ENCODE measurements at regions of chr5 and their contacts with region 1.

Region 1: GRCh38 chr5:77491783-77492652 is at the start of gene WDR41:
- DNase-seq: peak; percentile 83
- H3K4me3 ChIP-seq: peak within 1 kb of the TSS; percentile 58 to 80
- H3K27ac ChIP-seq: peak within 1 kb of the TSS; percentile 88 to 95
- H3K4me1 ChIP-seq: peaks cover 5% of the 10 kb centered on the region
- H3K27me3 ChIP-seq: no peaks in the 10 kb centered on the region
- CTCF ChIP-seq: peak; percentile 94 to 96 (median 96)
- POLR2A ChIP-seq: peak; percentile 56
- total RNA-seq, gene WDR41: 28.8 to 76.1 TPM

Region 2: GRCh38 chr5:76867827-76868693 is 624.0 kb before region 1 on chr5:
- intact Hi-C with region 1: loop called (anchors 10 kb)
- DNase-seq: peak; percentile 42
- H3K4me3 ChIP-seq: no peak overlapping the region
- H3K27ac ChIP-seq: no peak overlapping the region
- H3K4me1 ChIP-seq: no peaks in the 10 kb centered on the region
- H3K27me3 ChIP-seq: no peaks in the 10 kb centered on the region
- CTCF ChIP-seq: peak in 3 of 4 experiments; percentile 50 to 78 (median 77)
- POLR2A ChIP-seq: no peak

Region 3: DNA sequence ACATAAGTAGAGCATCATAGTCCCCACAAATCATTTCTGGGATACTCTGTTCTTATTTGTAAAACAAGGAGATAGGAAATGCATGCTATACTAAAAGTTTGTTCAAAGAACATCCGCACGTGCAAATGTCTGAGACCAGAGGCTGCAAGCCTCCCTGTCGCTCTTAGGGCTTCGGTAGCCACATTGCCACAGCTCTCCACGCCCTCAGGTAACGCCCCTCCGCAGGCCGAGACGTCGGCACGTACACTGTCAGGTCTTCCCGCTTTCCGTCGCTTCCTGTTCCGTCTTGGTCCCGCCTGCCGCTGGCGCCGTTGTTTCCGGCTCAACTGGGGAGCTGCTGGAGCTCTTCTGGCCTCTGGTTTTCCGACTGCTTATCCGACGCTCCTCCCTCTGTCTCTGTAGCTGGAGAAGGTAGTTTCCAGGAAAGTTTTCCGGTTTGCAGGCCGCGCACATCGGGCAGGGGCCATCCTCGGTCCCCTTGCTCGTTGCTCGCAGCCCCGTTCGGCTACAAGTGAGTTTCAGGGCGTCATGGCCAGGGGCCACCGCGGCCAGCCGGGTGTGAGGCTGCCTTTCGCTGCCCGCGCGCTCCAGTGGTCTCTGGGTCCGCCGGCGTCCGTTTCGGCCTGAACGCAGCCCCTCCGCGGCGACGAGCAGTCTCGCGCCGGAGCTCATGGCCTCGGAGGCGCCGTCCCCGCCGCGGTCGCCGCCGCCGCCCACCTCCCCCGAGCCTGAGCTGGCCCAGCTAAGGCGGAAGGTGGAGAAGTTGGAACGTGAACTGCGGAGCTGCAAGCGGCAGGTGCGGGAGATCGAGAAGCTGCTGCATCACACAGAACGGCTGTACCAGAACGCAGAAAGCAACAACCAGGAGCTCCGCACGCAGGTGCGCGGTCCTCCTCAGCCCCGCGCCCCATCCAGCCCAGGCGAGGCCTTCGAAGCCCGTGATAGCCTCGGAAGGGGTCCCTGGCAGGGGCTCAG is 461.6 kb before region 1 on chr5 and contains the start of gene AGGF1:
- intact Hi-C with region 1: loop called (anchors 2 kb)
- DNase-seq: peak; percentile 94
- H3K4me3 ChIP-seq: peak within 1 kb of the TSS; percentile 82 to 86
- H3K27ac ChIP-seq: peak within 1 kb of the TSS; percentile 86 to 87
- H3K4me1 ChIP-seq: no peaks in the 10 kb centered on the region
- H3K27me3 ChIP-seq: no peaks in the 10 kb centered on the region
- CTCF ChIP-seq: no peak
- POLR2A ChIP-seq: peak; percentile 64
- total RNA-seq, gene AGGF1: 28.5 to 29.6 TPM

Region 4: GRCh38 chr5:77076961-77077823 is 414.8 kb before region 1 on chr5:
- intact Hi-C with region 1: loop called (anchors 2 kb)
- DNase-seq: peak; percentile 24
- H3K4me3 ChIP-seq: peak overlapping the region; percentile 33 to 39
- H3K27ac ChIP-seq: peak overlapping the region; percentile 39 to 56
- H3K4me1 ChIP-seq: peaks cover 2% of the 10 kb centered on the region
- H3K27me3 ChIP-seq: no peaks in the 10 kb centered on the region
- CTCF ChIP-seq: peak; percentile 31 to 53 (median 46)
- POLR2A ChIP-seq: no peak

Region 5: DNA sequence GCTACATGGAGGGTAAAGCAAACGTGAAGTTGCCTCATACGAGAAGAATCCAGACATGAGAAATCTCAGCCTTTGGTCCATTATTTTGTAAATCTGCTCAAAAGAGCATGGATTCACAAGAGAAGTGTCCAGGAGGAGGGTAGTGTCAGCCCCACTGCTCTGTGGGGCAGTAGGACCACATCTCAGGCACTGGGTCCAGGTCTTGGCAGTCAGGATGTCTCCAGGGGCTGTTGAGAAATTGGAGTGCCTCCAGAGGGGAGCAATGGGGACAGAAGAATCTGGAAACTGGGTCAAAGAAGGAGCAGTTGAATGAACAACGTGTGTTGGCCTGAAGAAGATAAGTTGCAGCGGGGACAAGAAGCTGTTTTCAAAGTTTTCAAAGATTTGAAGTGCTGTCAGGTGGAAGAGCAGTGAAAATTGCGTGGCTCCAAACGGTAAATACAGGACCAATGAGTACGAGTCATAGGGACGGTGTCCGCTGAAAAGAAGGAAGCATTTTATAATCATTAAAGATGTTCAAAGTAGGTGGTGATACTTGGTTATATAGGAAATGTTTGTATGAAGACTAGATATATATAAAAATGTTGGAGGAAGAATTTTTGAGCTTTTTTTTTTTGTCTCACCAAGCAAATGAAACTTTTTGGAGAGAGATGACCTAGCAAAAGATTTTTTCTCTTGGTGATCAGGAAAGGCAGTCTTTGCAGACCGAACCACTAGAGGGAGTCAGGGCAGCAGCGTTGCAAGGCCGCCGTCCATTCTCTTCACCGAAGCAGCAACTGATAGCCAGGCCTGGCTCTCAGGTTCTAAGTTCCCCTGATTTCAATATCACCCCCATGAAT is 347.8 kb before region 1 on chr5:
- intact Hi-C with region 1: loop called (anchors 1 kb)
- DNase-seq: peak; percentile 80
- H3K4me3 ChIP-seq: no peak overlapping the region
- H3K27ac ChIP-seq: no peak overlapping the region
- H3K4me1 ChIP-seq: no peaks in the 10 kb centered on the region
- H3K27me3 ChIP-seq: no peaks in the 10 kb centered on the region
- CTCF ChIP-seq: peak; percentile 52 to 82 (median 72)
- POLR2A ChIP-seq: no peak